CD4-positive, alpha-beta T cell (primary cell): ENCODE measurements at regions of chr7 and their contacts with region 1.

Region 1: GRCh38 chr7:66628361-66629140 is at the start of gene KCTD7:
- DNase-seq: peak; percentile 84 to 98 (median 93)
- ATAC-seq: peak; percentile 90
- H3K4me3 ChIP-seq: peak within 1 kb of the TSS; percentile 75
- H3K4me3 Mint-ChIP-seq: peak within 1 kb of the TSS; percentile 92
- H3K27ac ChIP-seq: peak within 1 kb of the TSS; percentile 81 to 88
- H3K27ac Mint-ChIP-seq: peak within 1 kb of the TSS; percentile 91
- H3K4me1 ChIP-seq: peaks cover 54% of the 10 kb centered on the region
- H3K4me1 Mint-ChIP-seq: peaks cover 49% of the 10 kb centered on the region
- H3K27me3 ChIP-seq: no peaks in the 10 kb centered on the region
- H3K27me3 Mint-ChIP-seq: no peaks in the 10 kb centered on the region
- CTCF ChIP-seq: no peak
- total RNA-seq, gene KCTD7: 15.2 TPM

Region 2: GRCh38 chr7:66576646-66577045 is 51.9 kb before region 1 on chr7:
- CTCF ChIA-PET with region 1: no interaction called
- POLR2A ChIA-PET with region 1: interaction called, 3 read pairs
- intact Hi-C with region 1: loop called in 1 of 2 experiments (anchors 10 kb)
- DNase-seq: no peak
- ATAC-seq: no peak
- H3K4me3 ChIP-seq: no peak overlapping the region
- H3K4me3 Mint-ChIP-seq: no peak overlapping the region
- H3K27ac ChIP-seq: no peak overlapping the region
- H3K27ac Mint-ChIP-seq: peak overlapping the region; percentile 43
- H3K4me1 ChIP-seq: peaks cover 14% of the 10 kb centered on the region
- H3K4me1 Mint-ChIP-seq: peaks cover 49% of the 10 kb centered on the region
- H3K27me3 ChIP-seq: no peaks in the 10 kb centered on the region
- H3K27me3 Mint-ChIP-seq: no peaks in the 10 kb centered on the region
- CTCF ChIP-seq: no peak

Region 3: DNA sequence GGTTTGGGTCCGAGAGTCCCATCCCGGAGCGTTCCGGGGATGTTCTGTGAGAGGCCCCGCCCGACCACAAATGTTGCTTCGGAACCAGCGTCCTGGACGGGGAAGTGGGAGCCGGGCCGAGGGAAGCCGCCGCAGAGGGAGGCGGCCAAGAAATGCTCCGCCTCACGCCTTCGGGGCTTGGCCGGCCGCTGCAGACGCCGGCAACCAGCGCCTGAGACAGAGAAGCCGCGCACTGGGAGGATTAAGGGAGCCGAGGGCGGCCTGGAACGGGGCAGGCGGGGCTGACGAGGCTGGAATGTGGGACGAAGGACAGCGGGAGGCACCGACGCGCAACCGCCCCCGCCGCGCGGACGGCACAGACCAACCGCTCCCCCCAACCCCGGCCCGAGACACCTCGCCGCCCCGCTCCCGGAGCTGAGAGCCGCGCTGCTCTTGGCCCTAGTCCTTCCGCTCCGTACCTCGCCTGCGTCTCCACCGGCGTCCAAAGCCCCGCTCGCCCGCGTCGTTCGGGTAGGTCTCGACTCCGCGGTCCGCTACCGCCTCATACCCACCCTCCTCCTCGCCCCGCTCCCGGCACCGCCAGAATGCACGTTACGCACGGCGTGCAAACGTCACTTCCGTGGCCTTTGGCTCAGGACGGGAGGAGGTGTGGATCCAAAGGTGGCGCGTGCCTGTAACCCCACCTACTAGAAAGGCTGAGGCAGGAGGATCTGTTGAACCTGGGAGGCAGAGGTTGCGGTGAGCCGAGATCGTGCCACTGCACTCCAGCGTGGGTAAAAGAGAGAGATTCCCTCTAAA is 36.6 kb before region 1 on chr7:
- CTCF ChIA-PET with region 1: interaction called, 3 read pairs
- POLR2A ChIA-PET with region 1: interaction called, 6 read pairs
- intact Hi-C with region 1: loop called (anchors 1 kb)
- DNase-seq: peak; percentile 76 to 96 (median 88)
- ATAC-seq: peak; percentile 98
- H3K4me3 ChIP-seq: peak overlapping the region; percentile 97
- H3K4me3 Mint-ChIP-seq: peak overlapping the region; percentile 99
- H3K27ac ChIP-seq: peak overlapping the region; percentile 60 to 80
- H3K27ac Mint-ChIP-seq: peak overlapping the region; percentile 99
- H3K4me1 ChIP-seq: peaks cover 43% of the 10 kb centered on the region
- H3K4me1 Mint-ChIP-seq: peaks cover 47% of the 10 kb centered on the region
- H3K27me3 ChIP-seq: no peaks in the 10 kb centered on the region
- H3K27me3 Mint-ChIP-seq: no peaks in the 10 kb centered on the region
- CTCF ChIP-seq: no peak

Region 4: GRCh38 chr7:66790196-66790595 is 161.6 kb after region 1 on chr7:
- CTCF ChIA-PET with region 1: no interaction called
- POLR2A ChIA-PET with region 1: no interaction called
- intact Hi-C with region 1: no loop called
- DNase-seq: peak in 1 of 14 experiments; percentile 2
- ATAC-seq: no peak
- H3K4me3 ChIP-seq: no peak overlapping the region
- H3K4me3 Mint-ChIP-seq: no peak overlapping the region
- H3K27ac ChIP-seq: no peak overlapping the region
- H3K27ac Mint-ChIP-seq: no peak overlapping the region
- H3K4me1 ChIP-seq: no peaks in the 10 kb centered on the region
- H3K4me1 Mint-ChIP-seq: no peaks in the 10 kb centered on the region
- H3K27me3 ChIP-seq: no peaks in the 10 kb centered on the region
- H3K27me3 Mint-ChIP-seq: no peaks in the 10 kb centered on the region
- CTCF ChIP-seq: no peak

Region 5: DNA sequence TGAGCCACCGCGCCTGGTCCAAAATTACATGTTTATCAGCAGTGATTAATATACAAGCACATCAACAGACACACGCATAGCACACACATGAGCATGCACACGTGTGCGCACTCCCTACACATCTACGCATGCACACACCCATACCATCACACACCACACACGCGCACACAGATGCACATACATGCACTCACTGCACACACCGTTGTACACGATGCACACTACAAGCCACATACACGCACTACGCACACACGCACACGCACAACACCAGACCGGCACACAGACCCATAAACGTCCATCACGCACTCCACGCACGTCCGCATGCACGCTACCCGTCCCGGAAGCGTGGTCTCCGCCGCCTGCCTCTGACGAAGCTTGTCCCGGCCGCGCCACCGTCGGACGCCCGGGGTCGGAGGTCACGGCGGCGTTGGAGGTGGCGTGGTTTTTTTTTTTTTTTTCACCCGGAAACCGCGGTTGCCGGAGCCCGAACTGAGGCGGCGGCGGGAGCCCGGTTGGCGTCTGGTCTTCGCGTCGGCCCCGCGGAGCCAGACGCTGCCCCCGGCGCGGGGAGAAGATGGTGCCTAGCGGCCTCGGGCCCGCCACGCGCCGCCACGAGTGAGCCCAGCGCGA is 292.3 kb after region 1 on chr7 and contains the start of gene TMEM248:
- CTCF ChIA-PET with region 1: no interaction called
- POLR2A ChIA-PET with region 1: interaction called, 4 read pairs
- intact Hi-C with region 1: loop called in 1 of 2 experiments (anchors 5 kb)
- DNase-seq: peak; percentile 85 to 96 (median 91)
- ATAC-seq: peak; percentile 86
- H3K4me3 ChIP-seq: peak within 1 kb of the TSS; percentile 95
- H3K4me3 Mint-ChIP-seq: peak within 1 kb of the TSS; percentile 100
- H3K27ac ChIP-seq: peak within 1 kb of the TSS; percentile 76 to 90
- H3K27ac Mint-ChIP-seq: peak within 1 kb of the TSS; percentile 99
- H3K4me1 ChIP-seq: peaks cover 42% of the 10 kb centered on the region
- H3K4me1 Mint-ChIP-seq: peaks cover 43% of the 10 kb centered on the region
- H3K27me3 ChIP-seq: no peaks in the 10 kb centered on the region
- H3K27me3 Mint-ChIP-seq: no peaks in the 10 kb centered on the region
- CTCF ChIP-seq: no peak
- total RNA-seq, gene TMEM248: 64.7 to 67.4 TPM